Endothelial cell of umbilical vein (primary cell): ENCODE measurements at regions of chr12 and their contacts with region 1.

Region 1: GRCh38 chr12:90659060-90659459 is 295.9 kb downstream of the CCER1 start:
- DNase-seq: no peak
- H3K4me3 ChIP-seq: no peak overlapping the region
- H3K27ac ChIP-seq: no peak overlapping the region
- H3K4me1 ChIP-seq: no peaks in the 10 kb centered on the region
- H3K27me3 ChIP-seq: no peaks in the 10 kb centered on the region
- CTCF ChIP-seq: no peak
- POLR2A ChIP-seq: no peak

Region 2: DNA sequence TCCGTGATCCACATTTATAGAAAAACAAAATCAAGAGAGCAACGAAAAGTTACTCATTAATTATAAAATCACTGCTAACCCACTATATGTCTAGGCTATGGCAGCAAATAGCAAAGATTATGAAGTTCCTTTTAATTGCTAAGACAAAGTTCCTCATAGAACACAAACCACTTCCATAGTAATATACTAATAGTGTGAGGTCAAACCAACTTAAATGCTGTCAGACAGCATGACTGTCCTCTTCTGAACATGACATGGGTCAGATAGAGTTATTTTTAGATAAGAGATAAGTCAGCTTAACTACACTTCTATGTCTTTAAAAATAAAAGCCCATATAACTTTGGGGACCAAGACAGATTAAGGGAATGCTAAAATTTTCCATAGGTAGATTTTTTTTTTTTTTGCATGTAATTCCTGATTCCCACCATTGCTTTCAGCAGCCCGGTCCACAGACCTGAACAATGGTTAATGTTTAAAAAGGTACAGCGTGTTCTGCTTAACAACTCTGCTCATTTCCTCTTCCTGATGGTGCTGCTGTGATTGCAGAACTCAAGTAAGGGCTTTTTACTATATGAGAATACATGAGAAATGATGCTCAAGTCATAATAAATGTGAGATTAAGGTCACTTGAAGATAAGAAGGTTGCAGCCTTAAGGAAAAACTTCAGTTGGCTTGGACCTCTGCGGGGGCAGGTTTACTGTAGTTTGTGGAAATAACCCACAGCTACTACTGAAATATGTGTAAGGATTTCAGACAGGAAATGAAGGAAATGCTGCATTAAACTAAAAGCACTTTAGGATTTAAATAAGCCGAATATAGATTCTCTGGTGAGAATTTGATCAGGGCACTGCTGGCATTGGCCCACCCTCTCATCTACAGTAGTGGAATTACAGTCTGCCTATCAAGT is 1269.1 kb before region 1 on chr12:
- CTCF ChIA-PET with region 1: no interaction called
- POLR2A ChIA-PET with region 1: no interaction called
- dilution Hi-C with region 1: no loop called
- intact Hi-C with region 1: loop called (anchors 5 kb)
- DNase-seq: peak; percentile 89
- H3K4me3 ChIP-seq: peak overlapping the region in 1 of 3 experiments; percentile 6
- H3K27ac ChIP-seq: peak overlapping the region; percentile 80
- H3K4me1 ChIP-seq: peaks cover 33% of the 10 kb centered on the region
- H3K27me3 ChIP-seq: no peaks in the 10 kb centered on the region
- CTCF ChIP-seq: no peak
- POLR2A ChIP-seq: no peak

Region 3: GRCh38 chr12:90679674-90680073 is 20.6 kb after region 1 on chr12:
- CTCF ChIA-PET with region 1: no interaction called
- POLR2A ChIA-PET with region 1: no interaction called
- dilution Hi-C with region 1: no loop called
- intact Hi-C with region 1: no loop called
- DNase-seq: no peak
- H3K4me3 ChIP-seq: no peak overlapping the region
- H3K27ac ChIP-seq: no peak overlapping the region
- H3K4me1 ChIP-seq: no peaks in the 10 kb centered on the region
- H3K27me3 ChIP-seq: no peaks in the 10 kb centered on the region
- CTCF ChIP-seq: no peak
- POLR2A ChIP-seq: no peak